ENCODE measurements at regions of chr13 and their contacts with region 1.

Region 1: GRCh38 chr13:80469853-80470381 is 129.0 kb upstream of the SPRY2 start:
- DNase-seq: peak; percentile 73
- H3K4me3 ChIP-seq: no peak overlapping the region
- H3K27ac ChIP-seq: peak overlapping the region; percentile 61
- H3K4me1 ChIP-seq: peaks cover 29% of the 10 kb centered on the region
- H3K27me3 ChIP-seq: no peaks in the 10 kb centered on the region
- CTCF ChIP-seq: no peak

Region 2: GRCh38 chr13:80454245-80454644 is 15.7 kb before region 1 on chr13:
- CTCF ChIA-PET with region 1: no interaction called
- dilution Hi-C with region 1: no loop called
- in situ Hi-C with region 1: no loop called
- intact Hi-C with region 1: loop called (anchors 2 kb)
- DNase-seq: peak; percentile 19
- H3K4me3 ChIP-seq: no peak overlapping the region
- H3K27ac ChIP-seq: no peak overlapping the region
- H3K4me1 ChIP-seq: no peaks in the 10 kb centered on the region
- H3K27me3 ChIP-seq: peaks cover 6% of the 10 kb centered on the region
- CTCF ChIP-seq: no peak

Region 3: DNA sequence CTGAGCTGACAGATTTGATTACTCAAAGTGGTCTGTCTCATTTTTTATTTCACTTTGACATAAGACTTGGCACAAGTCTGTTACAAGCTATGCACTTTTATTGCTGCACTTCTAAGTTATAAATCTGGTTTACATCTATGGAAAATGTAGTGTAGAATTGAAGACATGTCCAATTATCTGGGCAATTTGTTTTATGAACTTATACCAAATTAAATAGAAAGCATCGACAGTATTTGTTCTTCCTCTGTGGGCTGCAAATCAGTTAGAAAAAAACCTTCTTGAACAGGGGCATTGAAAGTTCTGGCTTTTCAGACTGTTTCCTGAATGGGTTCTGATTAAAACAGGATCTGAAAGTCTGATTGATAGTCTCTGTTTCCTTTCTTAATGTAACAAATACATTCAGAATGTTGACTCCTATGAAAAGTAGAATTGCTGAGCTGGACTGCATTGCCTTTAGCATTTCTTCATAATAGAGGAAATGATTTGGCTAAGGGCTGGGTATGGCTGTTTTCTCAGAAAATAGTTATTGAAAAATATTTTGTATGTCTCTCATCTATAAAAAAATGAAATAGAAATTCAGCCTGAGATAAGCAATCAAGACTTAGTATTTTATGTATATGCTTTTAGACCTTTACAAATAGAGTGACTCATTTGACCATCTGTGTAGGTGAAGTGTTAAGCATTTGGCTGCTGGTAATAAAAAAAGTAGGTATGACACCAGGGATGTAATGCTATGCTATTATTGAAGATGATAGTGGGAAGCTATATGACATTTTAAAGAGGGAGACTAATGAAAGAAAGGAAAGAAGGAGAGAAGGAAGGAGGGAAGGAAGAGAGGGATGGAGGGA is 82.0 kb after region 1 on chr13:
- CTCF ChIA-PET with region 1: no interaction called
- dilution Hi-C with region 1: no loop called
- in situ Hi-C with region 1: no loop called
- intact Hi-C with region 1: loop called (anchors 5 kb)
- DNase-seq: no peak
- H3K4me3 ChIP-seq: no peak overlapping the region
- H3K27ac ChIP-seq: no peak overlapping the region
- H3K4me1 ChIP-seq: no peaks in the 10 kb centered on the region
- H3K27me3 ChIP-seq: no peaks in the 10 kb centered on the region
- CTCF ChIP-seq: no peak